Naive thymus-derived CD4-positive, alpha-beta T cell (primary cell): ENCODE measurements at regions of chr2 and their contacts with region 1.

Region 1: DNA sequence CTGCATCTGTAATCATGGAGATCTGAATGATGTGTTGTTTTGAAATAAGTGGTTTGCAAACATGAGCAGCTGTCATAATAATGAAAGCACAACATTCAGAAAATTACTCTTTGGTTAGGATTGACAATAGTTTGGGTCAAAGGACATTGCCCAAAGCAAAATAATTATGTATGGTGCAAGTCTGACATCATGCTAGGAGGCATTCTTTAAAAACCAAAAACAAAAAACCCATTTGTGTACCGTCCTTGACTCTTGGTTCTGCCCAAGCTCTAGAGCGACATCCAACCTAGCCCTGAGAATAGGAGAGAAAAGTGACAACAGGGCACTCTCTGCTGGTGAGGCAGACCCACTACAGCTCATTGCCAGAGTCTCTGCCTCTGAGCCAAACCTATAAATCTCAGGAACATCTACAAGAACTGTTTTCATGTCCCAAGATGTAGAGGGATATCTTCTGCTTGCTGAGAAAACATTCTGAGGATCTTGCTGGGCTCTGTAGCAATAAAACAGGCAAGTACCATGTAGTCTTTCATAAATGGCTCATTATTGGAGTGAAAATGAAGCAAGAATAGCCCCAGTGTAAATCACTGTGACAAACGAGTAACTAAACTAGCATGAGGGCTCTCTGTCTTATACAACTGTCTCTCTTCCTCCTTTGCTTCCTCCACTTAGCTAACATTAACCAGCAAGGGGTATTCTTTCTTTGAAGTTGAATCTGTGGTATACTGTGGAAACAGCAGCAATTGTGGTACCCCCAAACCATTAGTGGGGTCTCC is 266.8 kb upstream of the CXCR4 start:
- DNase-seq: peak in 7 of 9 donors; percentile 63 to 79 (median 69)
- ATAC-seq: peak; percentile 78
- H3K4me3 ChIP-seq: no peak overlapping the region
- H3K4me3 Mint-ChIP-seq: peak overlapping the region in 6 of 10 donors; percentile 4 to 73 (median 30)
- H3K27ac ChIP-seq: no peak overlapping the region
- H3K27ac Mint-ChIP-seq: peak overlapping the region; percentile 37 to 98 (median 92)
- H3K4me1 ChIP-seq: peaks cover 22 to 25% of the 10 kb centered on the region in 2 donors
- H3K4me1 Mint-ChIP-seq: peaks cover 21 to 46% (median 40%) of the 10 kb centered on the region in 7 donors
- H3K27me3 ChIP-seq: no peaks in the 10 kb centered on the region
- H3K27me3 Mint-ChIP-seq: no peaks in the 10 kb centered on the region

Region 2: GRCh38 chr2:134988994-134989605 is 1395.6 kb before region 1 on chr2:
- CTCF ChIA-PET with region 1: no interaction called
- POLR2A ChIA-PET with region 1: no interaction called
- intact Hi-C with region 1: loop called in 1 of 2 experiments (anchors 1 kb)
- DNase-seq: peak in 5 of 9 donors; percentile 13 to 35 (median 23)
- ATAC-seq: no peak
- H3K4me3 ChIP-seq: no peak overlapping the region
- H3K4me3 Mint-ChIP-seq: no peak overlapping the region
- H3K27ac ChIP-seq: no peak overlapping the region
- H3K27ac Mint-ChIP-seq: no peak overlapping the region
- H3K4me1 ChIP-seq: no peaks in the 10 kb centered on the region
- H3K4me1 Mint-ChIP-seq: no peaks in the 10 kb centered on the region
- H3K27me3 ChIP-seq: no peaks in the 10 kb centered on the region
- H3K27me3 Mint-ChIP-seq: peaks cover 0 to 22% (median 14%) of the 10 kb centered on the region in 5 donors

Region 3: GRCh38 chr2:135337071-135337470 is 1047.6 kb before region 1 on chr2:
- CTCF ChIA-PET with region 1: no interaction called
- POLR2A ChIA-PET with region 1: no interaction called
- intact Hi-C with region 1: no loop called
- DNase-seq: no peak
- ATAC-seq: no peak
- H3K4me3 ChIP-seq: no peak overlapping the region
- H3K4me3 Mint-ChIP-seq: no peak overlapping the region
- H3K27ac ChIP-seq: no peak overlapping the region
- H3K27ac Mint-ChIP-seq: no peak overlapping the region
- H3K4me1 ChIP-seq: no peaks in the 10 kb centered on the region
- H3K4me1 Mint-ChIP-seq: no peaks in the 10 kb centered on the region
- H3K27me3 ChIP-seq: no peaks in the 10 kb centered on the region
- H3K27me3 Mint-ChIP-seq: no peaks in the 10 kb centered on the region

Region 4: DNA sequence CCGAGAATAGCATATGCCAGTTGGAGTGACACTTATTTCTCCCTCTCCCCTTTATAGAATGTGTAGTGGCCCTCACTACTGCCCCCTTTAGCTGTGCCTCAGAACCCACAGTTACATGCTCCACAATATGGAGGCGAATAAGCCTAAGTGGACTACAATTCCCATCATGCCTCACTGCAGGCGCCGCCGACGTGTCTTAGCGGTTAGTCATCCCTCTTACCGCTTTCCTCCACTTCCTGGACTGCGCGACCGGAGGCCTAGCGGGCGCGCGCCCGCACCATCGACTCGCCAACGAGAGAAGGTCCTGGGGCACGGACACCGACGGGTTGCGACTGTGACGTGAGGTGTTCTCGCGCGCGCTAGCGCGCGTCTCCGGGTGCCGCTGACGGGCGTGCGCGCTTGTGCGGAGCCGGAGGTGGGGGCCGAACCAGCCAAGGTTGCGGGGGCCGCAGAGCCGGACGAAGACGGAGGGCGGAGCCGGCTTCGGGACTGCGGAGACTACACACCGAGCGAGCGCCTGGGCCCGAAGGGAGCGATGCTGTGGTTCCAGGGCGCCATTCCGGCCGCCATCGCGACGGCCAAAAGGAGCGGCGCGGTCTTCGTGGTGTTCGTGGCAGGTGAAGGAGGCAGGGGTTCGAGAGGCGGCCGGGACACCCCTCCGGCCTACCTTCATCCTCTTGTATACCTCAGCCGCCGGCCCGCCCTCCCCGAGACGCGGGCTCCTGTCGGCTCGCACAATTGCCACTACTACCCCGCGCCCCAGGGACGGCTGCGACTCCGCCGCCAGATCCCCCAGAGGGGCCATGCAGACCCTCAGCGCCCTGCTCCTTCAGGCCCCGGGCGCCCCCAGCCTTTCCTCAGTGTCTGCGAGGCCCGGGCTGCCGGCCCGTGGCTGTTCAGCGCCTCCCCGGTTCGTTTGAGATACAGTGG is 643.1 kb before region 1 on chr2 and contains the start of gene UBXN4:
- CTCF ChIA-PET with region 1: no interaction called
- POLR2A ChIA-PET with region 1: no interaction called
- intact Hi-C with region 1: loop called in 1 of 2 experiments (anchors 1 kb)
- DNase-seq: peak; percentile 73 to 93 (median 88)
- ATAC-seq: peak; percentile 95
- H3K4me3 ChIP-seq: peak within 1 kb of the TSS; percentile 88
- H3K4me3 Mint-ChIP-seq: peak within 1 kb of the TSS; percentile 92 to 98 (median 95)
- H3K27ac ChIP-seq: peak within 1 kb of the TSS; percentile 97
- H3K27ac Mint-ChIP-seq: peak within 1 kb of the TSS; percentile 89 to 99 (median 95)
- H3K4me1 ChIP-seq: peaks cover 20 to 22% of the 10 kb centered on the region in 2 donors
- H3K4me1 Mint-ChIP-seq: peaks cover 24 to 47% (median 43%) of the 10 kb centered on the region in 7 donors
- H3K27me3 ChIP-seq: no peaks in the 10 kb centered on the region
- H3K27me3 Mint-ChIP-seq: no peaks in the 10 kb centered on the region
- total RNA-seq, gene UBXN4: 115 to 158 (median 145) TPM

Region 5: GRCh38 chr2:135876066-135876711 is 508.5 kb before region 1 on chr2 and contains the start of gene MCM6:
- CTCF ChIA-PET with region 1: interaction called, 4 read pairs
- POLR2A ChIA-PET with region 1: interaction called, 3 read pairs
- intact Hi-C with region 1: loop called (anchors 1 kb)
- DNase-seq: peak; percentile 91 to 99 (median 97)
- ATAC-seq: peak; percentile 96
- H3K4me3 ChIP-seq: peak within 1 kb of the TSS; percentile 83
- H3K4me3 Mint-ChIP-seq: peak within 1 kb of the TSS; percentile 85 to 97 (median 93)
- H3K27ac ChIP-seq: peak within 1 kb of the TSS; percentile 84
- H3K27ac Mint-ChIP-seq: peak within 1 kb of the TSS; percentile 84 to 97 (median 95)
- H3K4me1 ChIP-seq: peaks cover 12 to 18% of the 10 kb centered on the region in 2 donors
- H3K4me1 Mint-ChIP-seq: peaks cover 23 to 44% (median 41%) of the 10 kb centered on the region in 7 donors
- H3K27me3 ChIP-seq: no peaks in the 10 kb centered on the region
- H3K27me3 Mint-ChIP-seq: peaks cover 0 to 5% (median 0%) of the 10 kb centered on the region in 5 donors
- total RNA-seq, gene MCM6: 12.1 to 105 (median 21.6) TPM

Region 6: DNA sequence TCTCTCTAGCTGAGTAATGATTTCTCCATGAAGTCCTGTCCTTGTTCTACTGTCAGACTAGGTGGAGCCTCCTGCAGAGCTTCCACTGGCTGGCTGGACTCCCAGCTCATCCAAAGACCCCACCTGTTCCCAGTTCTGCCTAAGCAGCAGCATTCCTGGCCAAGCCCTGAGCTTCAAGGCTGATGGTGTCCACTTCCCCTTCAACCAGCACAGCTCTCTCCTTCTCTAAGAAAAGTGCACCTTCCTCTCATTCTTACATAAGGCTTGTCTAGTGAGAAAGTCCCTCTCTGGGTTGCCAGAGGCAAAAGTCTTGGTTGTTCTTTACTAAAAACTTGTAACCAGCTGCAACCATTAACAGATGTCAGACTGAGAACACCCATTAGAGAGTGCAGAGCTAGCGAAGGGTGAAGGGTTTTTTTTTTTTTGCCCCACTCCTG is 325.7 kb before region 1 on chr2:
- CTCF ChIA-PET with region 1: no interaction called
- POLR2A ChIA-PET with region 1: no interaction called
- intact Hi-C with region 1: loop called in 1 of 2 experiments (anchors 1 kb)
- DNase-seq: no peak
- ATAC-seq: no peak
- H3K4me3 ChIP-seq: no peak overlapping the region
- H3K4me3 Mint-ChIP-seq: peak overlapping the region in 2 of 10 donors; percentile 43 to 50
- H3K27ac ChIP-seq: no peak overlapping the region
- H3K27ac Mint-ChIP-seq: peak overlapping the region in 5 of 9 donors; percentile 16 to 90 (median 65)
- H3K4me1 ChIP-seq: peaks cover 43 to 44% of the 10 kb centered on the region in 2 donors
- H3K4me1 Mint-ChIP-seq: peaks cover 46 to 90% (median 80%) of the 10 kb centered on the region in 7 donors
- H3K27me3 ChIP-seq: no peaks in the 10 kb centered on the region
- H3K27me3 Mint-ChIP-seq: no peaks in the 10 kb centered on the region

Region 7: DNA sequence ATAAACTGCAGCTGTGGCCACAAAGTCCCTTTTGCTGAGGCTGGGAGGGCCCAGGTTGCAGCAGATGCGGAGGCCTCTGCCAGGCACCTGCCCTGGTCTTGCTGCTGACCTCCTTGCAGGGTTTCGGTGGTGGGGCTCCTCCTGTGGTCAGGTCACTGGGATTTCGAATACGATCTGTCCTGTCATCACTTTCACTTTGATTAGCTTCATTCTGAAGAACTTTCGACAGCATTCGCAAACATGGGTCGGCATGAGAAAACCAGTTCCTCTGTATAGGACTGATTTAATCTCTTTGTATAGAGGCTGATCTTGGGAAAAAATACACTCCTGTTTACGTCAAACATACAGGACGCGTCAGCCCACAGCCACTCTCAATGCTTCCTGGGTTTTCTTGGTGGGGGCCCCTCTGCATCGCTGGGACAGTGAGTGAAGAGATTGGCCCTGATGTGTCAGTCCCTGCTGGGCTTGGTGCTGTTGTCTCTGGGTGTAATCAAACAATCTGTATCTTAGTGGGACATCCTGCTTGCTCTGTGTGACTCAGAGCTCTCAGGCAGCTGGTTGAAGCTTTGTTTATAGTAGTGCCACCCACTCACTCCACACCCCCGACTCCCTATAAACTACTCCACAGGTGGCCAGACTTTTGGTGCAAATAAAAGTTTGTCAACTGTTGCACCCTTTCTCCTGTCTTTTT is 57.4 kb before region 1 on chr2:
- CTCF ChIA-PET with region 1: interaction called, 4 read pairs
- POLR2A ChIA-PET with region 1: interaction called, 12 read pairs
- intact Hi-C with region 1: loop called (anchors 2 kb)
- DNase-seq: peak; percentile 28 to 90 (median 83)
- ATAC-seq: peak; percentile 93
- H3K4me3 ChIP-seq: peak overlapping the region; percentile 38
- H3K4me3 Mint-ChIP-seq: peak overlapping the region; percentile 74 to 89 (median 82)
- H3K27ac ChIP-seq: peak overlapping the region; percentile 74
- H3K27ac Mint-ChIP-seq: peak overlapping the region; percentile 93 to 99 (median 97)
- H3K4me1 ChIP-seq: peaks cover 17 to 44% of the 10 kb centered on the region in 2 donors
- H3K4me1 Mint-ChIP-seq: peaks cover 43 to 73% (median 62%) of the 10 kb centered on the region in 7 donors
- H3K27me3 ChIP-seq: no peaks in the 10 kb centered on the region
- H3K27me3 Mint-ChIP-seq: no peaks in the 10 kb centered on the region